ENCODE measurements at regions of chr3 and their contacts with region 1.

Region 1: DNA sequence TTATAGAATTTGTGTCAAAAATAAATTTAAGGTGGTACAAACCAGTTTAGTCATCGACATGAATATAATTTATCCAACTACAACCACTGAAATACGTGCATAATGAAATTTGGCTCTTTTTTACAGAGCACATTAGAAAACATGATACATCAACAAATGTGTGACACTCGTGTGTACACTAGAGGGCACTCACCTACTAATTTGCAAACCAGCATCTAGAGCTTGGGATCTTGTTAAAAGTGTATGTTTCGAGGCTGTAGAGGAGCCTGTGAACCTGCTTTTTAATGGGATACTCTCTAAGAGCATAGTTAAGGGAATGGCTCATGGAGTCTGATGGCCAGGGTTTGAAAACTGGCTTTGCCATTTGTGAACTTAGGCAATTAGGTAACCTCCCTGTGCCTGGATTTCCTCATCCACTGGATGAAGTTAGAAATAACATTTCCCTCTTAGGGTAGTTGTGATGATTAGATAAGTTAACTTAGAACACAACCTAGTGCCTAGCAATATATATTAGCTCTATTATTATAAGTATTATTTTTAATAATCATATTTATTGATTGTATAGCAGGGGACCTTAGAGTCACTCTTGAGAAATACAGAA is 8.8 kb upstream of the CPOX start:
- DNase-seq: no peak

Region 2: GRCh38 chr3:98233468-98233867 is 368.7 kb before region 1 on chr3:
- intact Hi-C with region 1: no loop called
- DNase-seq: no peak

Region 3: DNA sequence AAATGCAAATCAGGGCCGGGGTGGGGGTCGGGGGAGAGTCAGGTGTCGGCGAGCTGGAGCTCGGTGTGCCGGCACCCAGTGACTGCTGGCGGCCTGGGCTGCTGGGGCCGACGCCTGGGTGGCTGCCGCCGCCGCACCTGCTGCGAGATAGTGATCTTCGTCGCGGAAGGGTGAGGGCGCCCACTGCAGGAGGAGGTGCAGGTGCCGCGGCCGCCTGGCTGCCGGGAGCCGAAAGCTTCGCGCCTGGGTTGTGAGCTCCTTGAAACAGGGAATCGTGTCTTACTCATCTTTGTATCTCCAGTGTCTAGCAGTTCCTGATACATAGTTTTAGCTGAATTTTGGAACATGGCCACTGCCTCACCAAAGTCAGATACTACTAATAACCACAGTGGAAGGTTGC is 55.3 kb after region 1 on chr3:
- intact Hi-C with region 1: no loop called
- DNase-seq: no peak

Region 4: DNA sequence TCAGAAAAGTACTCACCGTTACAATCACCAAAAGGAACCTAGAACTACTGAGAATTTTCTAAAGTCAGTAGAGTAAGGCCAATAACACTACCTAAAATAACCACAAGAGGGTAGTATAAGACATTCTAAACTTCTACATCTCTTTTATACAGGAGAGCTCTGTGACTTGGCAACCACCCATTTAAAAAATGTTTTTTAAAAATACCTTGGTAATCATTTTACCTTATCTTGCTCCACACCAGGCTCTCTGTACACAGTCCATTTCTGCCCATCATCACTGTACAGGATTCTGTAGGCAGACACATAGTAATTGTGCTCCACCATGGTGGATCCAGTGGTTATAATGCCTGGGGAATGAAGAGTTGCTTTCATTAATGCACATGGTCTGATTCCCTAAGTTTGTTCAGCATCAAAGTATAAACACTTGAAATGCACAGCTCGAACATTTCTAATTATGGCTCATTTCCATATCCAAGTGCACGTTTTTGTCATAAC is 215.4 kb after region 1 on chr3:
- intact Hi-C with region 1: loop called in 1 of 2 experiments (anchors 5 kb)
- DNase-seq: no peak